ENCODE measurements at regions of chr6 and their contacts with region 1.

Region 1: GRCh38 chr6:42217519-42218367 is at the start of gene MRPS10:
- DNase-seq: peak; percentile 83
- H3K4me3 ChIP-seq: peak within 1 kb of the TSS; percentile 95
- H3K27ac ChIP-seq: peak within 1 kb of the TSS; percentile 86
- H3K27me3 ChIP-seq: no peaks in the 10 kb centered on the region
- CTCF ChIP-seq: no peak
- polyA plus RNA-seq, gene MRPS10: 45.4 and 63.2 TPM in 2 replicates

Region 2: DNA sequence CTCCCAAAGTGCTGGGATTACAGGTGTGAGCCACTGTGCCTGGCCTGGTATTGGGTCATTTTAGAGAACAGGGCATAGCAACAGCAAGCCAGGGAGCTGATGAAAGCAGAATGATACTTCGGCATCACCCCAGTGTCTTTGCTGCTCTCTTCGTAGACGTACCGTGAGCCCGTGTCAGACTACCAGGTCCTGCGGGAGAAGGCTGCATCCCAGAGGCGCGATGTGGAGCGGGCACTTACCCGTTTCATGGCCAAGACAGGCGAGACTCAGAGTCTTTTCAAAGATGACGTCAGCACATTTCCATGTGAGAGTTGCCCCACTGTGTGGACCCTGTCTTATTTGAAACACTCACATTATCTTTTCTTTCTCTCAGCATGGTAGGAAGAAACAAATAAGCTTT is 151.6 kb before region 1 on chr6:
- CTCF ChIA-PET with region 1: interaction called, 10 read pairs
- POLR2A ChIA-PET with region 1: no interaction called
- DNase-seq: no peak
- H3K4me3 ChIP-seq: no peak overlapping the region
- H3K27ac ChIP-seq: no peak overlapping the region
- H3K27me3 ChIP-seq: no peaks in the 10 kb centered on the region
- CTCF ChIP-seq: no peak

Region 3: DNA sequence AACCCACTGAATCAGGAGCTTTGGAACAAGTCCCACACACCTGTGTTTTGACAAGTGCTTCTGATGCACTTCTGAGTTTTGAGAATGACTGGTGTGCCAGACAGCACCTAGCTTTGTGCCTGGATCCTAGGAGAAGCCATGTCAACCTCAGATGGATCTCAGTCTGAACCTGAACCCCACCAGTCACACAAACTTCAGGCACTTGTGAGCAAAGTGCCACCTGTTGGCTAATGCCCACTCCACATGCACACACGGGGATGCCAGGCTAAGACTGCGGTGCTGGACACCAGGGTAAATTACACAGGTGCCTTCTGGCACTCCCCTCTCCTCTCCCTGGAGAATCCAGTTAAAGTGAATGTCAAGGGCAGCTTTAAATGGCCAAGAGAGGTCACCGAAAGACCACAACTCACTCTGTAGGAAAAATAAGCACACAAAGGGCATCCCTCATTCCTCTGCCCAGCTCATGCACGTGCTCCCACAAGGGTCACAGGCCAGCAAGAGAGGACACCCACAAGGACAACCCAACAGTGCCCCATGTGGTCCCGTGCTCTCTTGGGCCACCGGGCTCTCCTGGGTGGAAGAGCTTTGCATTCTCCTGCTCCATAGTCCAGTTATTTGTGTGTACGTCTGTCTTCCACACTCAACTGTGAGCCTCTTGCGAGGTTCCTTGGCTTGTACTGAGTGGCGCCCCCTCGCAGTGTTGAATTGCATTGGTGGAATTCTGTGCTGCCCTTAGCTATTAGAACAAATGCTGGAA is 121.8 kb before region 1 on chr6:
- CTCF ChIA-PET with region 1: interaction called, 12 read pairs
- POLR2A ChIA-PET with region 1: no interaction called
- DNase-seq: no peak
- H3K4me3 ChIP-seq: no peak overlapping the region
- H3K27ac ChIP-seq: no peak overlapping the region
- H3K27me3 ChIP-seq: no peaks in the 10 kb centered on the region
- CTCF ChIP-seq: 0 out of 2 replicates have a peak, but pooled peaks have one; percentile 17

Region 4: DNA sequence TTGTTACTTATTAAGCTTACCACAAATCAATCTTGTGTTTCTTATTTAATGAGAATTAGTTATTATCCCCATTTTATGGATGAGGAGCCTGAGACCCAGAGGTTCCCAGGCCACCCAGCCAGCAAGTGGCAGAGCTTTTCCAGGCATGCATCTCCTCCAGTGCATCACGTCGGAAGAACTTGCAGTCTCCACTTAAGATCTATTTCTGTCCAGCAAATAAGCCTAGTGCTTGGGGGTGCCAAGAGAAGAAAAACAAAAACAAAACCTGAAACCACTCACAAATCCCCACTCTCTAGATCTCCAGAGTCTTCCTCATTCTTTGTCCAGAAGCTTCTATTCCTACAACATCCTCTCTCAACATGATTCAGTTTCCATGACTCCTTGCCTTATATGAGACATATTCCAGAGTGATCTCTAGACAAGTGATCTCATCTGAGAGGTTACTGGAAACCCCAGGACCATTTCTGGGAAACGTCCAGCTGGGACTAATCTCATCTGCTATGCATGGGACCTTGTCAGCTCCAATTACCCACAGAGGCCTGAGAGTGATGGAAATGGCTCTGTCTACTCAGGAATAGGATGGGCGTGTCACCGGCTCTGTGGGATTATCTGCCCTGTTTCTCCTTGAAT is 27.1 kb before region 1 on chr6:
- CTCF ChIA-PET with region 1: interaction called, 11 read pairs
- POLR2A ChIA-PET with region 1: interaction called, 6 read pairs
- DNase-seq: peak; percentile 69
- H3K4me3 ChIP-seq: no peak overlapping the region
- H3K27ac ChIP-seq: peak overlapping the region; percentile 73
- H3K27me3 ChIP-seq: no peaks in the 10 kb centered on the region
- CTCF ChIP-seq: no peak

Region 5: DNA sequence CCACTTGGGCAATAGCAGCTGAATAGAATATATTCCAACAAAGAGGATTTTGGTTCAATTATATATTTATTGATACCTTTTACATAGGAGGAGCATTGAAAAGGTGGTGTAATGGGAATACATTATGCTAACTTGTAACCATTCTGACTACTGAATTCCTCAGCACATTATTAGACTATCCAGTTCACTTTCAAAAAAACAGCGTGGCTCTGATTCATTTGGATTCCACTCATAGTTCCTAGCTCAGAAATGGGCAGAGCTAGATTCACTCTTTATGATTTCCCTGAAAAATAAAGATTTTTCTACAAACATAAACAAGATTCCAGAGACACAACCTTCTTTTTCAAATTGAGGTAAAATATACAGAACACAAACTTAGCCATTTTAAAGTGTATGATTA is 243.1 kb after region 1 on chr6:
- CTCF ChIA-PET with region 1: interaction called, 10 read pairs
- POLR2A ChIA-PET with region 1: no interaction called
- DNase-seq: no peak
- H3K4me3 ChIP-seq: no peak overlapping the region
- H3K27ac ChIP-seq: no peak overlapping the region
- H3K27me3 ChIP-seq: no peaks in the 10 kb centered on the region
- CTCF ChIP-seq: no peak

Measured in AG04450 (cell line).